ENCODE measurements at regions of chr5 and their contacts with region 1.

Region 1: DNA sequence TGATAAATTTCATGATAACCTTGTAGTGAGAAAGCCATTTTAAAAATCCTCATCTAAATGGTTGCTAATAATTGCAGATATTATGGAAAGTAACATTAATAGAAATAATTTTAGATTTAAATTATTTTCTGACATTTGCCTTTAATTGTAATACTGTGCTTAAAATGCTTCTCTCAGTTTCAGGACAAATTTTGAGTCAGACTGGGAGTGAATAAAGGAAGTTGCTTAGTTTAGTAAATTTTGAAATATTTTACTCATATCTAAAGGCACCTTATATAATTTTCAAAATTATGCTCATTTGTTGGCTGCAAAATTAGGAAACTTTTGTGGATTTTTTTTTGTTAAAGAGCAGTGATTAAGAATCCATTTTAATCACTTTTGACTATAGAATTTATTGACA is 93.8 kb downstream of the CSNK1G3 start:
- DNase-seq: no peak
- H3K4me3 ChIP-seq: no peak overlapping the region
- H3K27ac ChIP-seq: no peak overlapping the region
- H3K4me1 ChIP-seq: peaks cover 0 to 4% (median 1%) of the 10 kb centered on the region in 6 donors
- H3K27me3 ChIP-seq: no peaks in the 10 kb centered on the region
- CTCF ChIP-seq: no peak
- POLR2A ChIP-seq: no peak

Region 2: DNA sequence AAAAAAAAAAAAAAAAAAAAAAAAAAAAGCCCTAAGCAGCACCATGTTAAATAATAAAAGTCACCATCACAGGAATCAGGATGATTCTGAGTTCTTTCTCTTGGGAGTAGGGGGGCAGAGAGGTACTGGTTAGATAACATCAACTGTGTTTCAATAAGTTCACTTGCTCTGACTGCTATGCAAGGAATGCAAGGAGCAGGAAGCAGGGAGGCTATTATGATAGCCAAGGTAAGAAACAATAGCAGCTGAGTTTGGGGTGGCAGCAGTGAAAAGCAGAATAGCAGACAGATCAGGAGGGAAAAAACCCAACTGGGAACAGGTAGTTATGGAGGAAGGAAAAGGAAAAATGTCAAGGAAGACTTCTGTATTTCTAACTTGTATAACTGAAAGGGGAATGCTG is 190.8 kb before region 1 on chr5:
- intact Hi-C with region 1: loop called (anchors 10 kb)
- DNase-seq: no peak
- H3K4me3 ChIP-seq: no peak overlapping the region
- H3K27ac ChIP-seq: no peak overlapping the region
- H3K4me1 ChIP-seq: peaks cover 0 to 23% (median 7%) of the 10 kb centered on the region in 6 donors
- H3K27me3 ChIP-seq: no peaks in the 10 kb centered on the region
- CTCF ChIP-seq: no peak
- POLR2A ChIP-seq: no peak

Region 3: DNA sequence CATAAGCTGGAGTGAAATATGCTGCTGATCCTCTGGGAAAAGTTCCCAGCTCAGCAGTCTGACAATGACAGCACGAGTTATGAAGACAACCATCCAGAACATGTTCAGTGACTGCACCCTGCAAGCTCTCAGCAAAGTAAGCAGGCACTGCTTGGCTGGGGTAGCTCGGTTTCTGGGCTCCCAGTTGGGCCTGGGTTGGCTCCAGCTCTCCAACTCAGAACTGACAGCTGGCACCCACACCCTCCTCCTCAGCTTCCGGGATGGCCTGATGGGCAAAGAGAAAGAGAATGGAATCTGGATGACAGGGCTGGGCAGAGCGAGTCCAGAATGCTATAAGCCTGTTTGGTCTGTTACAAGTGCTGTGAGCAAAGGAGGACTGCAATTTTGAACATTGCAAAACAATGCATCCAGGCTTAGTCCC is 91.1 kb after region 1 on chr5:
- intact Hi-C with region 1: no loop called
- DNase-seq: no peak
- H3K4me3 ChIP-seq: no peak overlapping the region
- H3K27ac ChIP-seq: no peak overlapping the region
- H3K4me1 ChIP-seq: no peaks in the 10 kb centered on the region
- H3K27me3 ChIP-seq: no peaks in the 10 kb centered on the region
- CTCF ChIP-seq: no peak
- POLR2A ChIP-seq: no peak